ENCODE measurements at regions of chr1 and their contacts with region 1.

Region 1: GRCh38 chr1:209435654-209436566 is 147.6 kb upstream of the CAMK1G start:
- DNase-seq: peak; percentile 64 to 88
- H3K4me3 ChIP-seq: no peak overlapping the region
- H3K27ac ChIP-seq: peak overlapping the region; percentile 98
- H3K4me1 ChIP-seq: peaks cover 48% of the 10 kb centered on the region
- H3K27me3 ChIP-seq: no peaks in the 10 kb centered on the region
- CTCF ChIP-seq: peak; percentile 98

Region 2: DNA sequence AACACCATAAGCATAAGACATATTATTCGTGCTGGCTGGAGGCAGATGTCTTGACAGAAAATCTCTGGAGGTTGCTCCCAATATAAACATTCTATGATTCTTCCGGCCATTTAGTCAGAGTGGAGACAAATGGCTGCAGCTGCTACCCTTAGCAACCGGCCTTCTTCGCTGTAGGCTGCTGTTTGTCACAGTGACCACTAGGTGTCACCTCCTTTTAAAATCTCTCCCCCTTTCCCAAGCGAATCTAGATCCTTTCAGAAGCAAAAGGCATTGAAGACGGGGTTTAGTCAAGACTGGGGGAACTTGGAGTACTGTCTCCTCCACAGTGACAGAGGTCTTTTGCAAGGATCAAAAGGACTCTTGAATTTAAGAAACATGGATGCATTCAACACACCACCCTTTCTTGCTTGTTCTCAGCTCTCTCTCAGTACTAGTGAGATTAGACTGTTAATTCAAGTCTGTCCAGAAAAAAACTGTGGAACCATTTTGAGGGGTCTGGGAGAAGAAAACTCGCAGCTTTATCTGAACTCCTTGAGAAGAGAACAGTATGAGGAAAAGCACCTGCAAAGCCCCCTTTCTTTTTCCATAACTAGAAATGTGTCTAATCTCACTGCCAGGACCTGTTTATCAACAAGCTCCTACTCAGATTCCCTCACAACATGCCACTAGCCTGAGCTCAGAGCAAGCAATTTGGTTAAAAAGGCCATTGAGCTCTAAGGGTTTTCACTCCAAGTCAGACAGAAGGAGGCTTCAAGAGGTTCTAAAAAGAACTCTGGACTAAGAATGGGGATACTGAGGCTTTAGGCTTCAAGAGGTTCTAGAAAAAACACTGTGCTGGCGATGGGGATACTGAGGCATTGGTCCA is 783.4 kb before region 1 on chr1:
- CTCF ChIA-PET with region 1: no interaction called
- POLR2A ChIA-PET with region 1: no interaction called
- intact Hi-C with region 1: loop called (anchors 2 kb)
- DNase-seq: peak in 1 of 2 experiments; percentile 37
- H3K4me3 ChIP-seq: no peak overlapping the region
- H3K27ac ChIP-seq: no peak overlapping the region
- H3K4me1 ChIP-seq: no peaks in the 10 kb centered on the region
- H3K27me3 ChIP-seq: peaks cover 8% of the 10 kb centered on the region; the same call in 1 of the 2 replicates
- CTCF ChIP-seq: peak; percentile 88

Region 3: DNA sequence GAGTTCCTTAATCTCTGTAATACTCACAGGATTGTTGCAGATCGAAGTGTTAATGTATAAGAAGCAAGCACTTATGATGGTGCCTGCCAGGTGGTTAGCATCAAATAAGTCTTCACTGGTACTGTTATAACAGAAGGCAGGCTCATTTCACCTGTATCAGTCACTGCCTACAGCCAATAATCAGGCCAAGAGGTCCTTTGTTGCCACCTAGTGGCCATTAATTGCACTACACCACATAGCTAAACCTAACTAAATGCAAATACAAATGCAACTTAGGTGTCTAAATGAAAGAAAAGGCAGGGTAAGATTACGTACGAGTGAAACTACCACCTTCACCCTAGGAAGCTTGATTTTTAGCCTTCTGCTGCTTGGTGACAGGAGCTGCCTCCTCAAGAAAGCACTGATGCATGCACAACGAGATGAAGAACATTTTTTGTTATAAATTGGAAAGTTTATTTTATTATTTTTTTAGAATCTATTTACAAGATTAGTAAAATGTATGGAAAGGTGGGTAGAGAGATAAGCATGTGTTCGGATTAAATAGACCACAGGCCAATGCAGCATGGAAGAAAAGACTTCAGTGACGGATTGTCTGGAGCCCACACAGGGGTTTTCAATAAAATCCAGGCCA is 187.1 kb before region 1 on chr1:
- CTCF ChIA-PET with region 1: interaction called, 7 read pairs
- POLR2A ChIA-PET with region 1: no interaction called
- intact Hi-C with region 1: loop called (anchors 1 kb)
- DNase-seq: peak; percentile 50 to 55
- H3K4me3 ChIP-seq: no peak overlapping the region
- H3K27ac ChIP-seq: no peak overlapping the region
- H3K4me1 ChIP-seq: no peaks in the 10 kb centered on the region
- H3K27me3 ChIP-seq: no peaks in the 10 kb centered on the region
- CTCF ChIP-seq: peak; percentile 95

Region 4: GRCh38 chr1:209363112-209363511 is 72.8 kb before region 1 on chr1:
- CTCF ChIA-PET with region 1: no interaction called
- POLR2A ChIA-PET with region 1: interaction called, 20 read pairs
- intact Hi-C with region 1: no loop called
- DNase-seq: peak; percentile 55 to 76
- H3K4me3 ChIP-seq: no peak overlapping the region
- H3K27ac ChIP-seq: peak overlapping the region; percentile 26; the same call in 1 of the 2 replicates
- H3K4me1 ChIP-seq: peaks cover 32% of the 10 kb centered on the region
- H3K27me3 ChIP-seq: no peaks in the 10 kb centered on the region
- CTCF ChIP-seq: no peak

Region 5: DNA sequence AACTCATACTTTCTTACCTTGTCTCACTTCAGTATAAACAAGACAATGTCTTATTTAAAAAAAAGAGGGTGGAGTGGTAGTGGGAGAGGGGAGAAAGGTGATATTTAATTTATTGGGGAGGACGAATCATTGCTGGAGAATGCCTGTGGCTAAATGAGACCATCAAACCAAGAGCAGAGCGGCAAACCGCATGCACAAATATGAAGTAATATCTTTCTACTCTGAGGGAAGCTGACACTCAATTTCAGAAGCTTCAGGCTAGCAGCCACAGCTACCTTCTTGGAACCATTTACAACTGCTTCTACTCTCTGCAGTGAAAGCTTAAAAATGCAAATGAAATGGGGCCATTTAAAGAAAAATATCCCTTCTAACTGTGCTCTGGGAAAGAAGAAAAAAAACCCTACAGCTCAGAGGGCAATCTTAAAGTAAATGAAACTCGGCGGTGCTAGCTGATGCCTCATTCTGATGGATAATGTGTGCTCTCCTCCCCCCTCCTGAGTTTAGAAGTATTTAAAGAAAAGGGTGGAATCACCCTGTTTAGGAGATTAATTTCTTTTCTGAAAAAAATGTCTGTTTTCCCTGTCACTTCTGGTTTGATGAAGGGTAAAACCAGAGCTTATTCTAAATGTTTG is 30.6 kb before region 1 on chr1:
- CTCF ChIA-PET with region 1: interaction called, 4 read pairs
- POLR2A ChIA-PET with region 1: interaction called, 7 read pairs
- intact Hi-C with region 1: loop called (anchors 1 kb)
- DNase-seq: peak in 1 of 2 experiments; percentile 84
- H3K4me3 ChIP-seq: peak overlapping the region; percentile 43
- H3K27ac ChIP-seq: peak overlapping the region; percentile 97
- H3K4me1 ChIP-seq: peaks cover 89% of the 10 kb centered on the region
- H3K27me3 ChIP-seq: no peaks in the 10 kb centered on the region
- CTCF ChIP-seq: no peak

Region 6: GRCh38 chr1:209600541-209600940 is 164.6 kb after region 1 on chr1:
- CTCF ChIA-PET with region 1: no interaction called
- POLR2A ChIA-PET with region 1: no interaction called
- intact Hi-C with region 1: no loop called
- DNase-seq: no peak
- H3K4me3 ChIP-seq: no peak overlapping the region
- H3K27ac ChIP-seq: no peak overlapping the region
- H3K4me1 ChIP-seq: no peaks in the 10 kb centered on the region
- H3K27me3 ChIP-seq: no peaks in the 10 kb centered on the region; the same call in 1 of the 2 replicates
- CTCF ChIP-seq: no peak